ENCODE measurements at regions of chr3 and their contacts with region 1.

Region 1: DNA sequence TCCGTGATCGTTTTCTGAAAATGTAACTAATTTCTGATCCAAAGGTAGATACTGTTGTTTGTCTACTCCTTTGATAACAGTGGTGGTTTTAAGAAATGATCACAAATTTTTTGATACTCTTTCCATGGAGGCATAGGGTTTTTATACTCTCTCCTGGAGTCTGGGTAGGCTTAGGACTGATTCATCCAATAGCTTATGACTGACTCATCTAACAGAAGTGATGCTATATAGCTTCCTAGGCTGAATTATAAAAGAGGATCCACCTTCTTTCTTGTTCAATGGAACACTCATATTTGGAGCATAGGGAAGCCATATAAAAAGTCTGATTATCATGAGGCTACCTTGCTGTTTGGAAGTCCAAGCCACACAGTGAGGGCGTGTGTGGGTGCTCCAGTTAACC is 84.3 kb downstream of the CHST2 start:
- DNase-seq: no peak
- H3K4me3 Mint-ChIP-seq: no peak overlapping the region
- H3K27ac Mint-ChIP-seq: no peak overlapping the region
- H3K4me1 Mint-ChIP-seq: no peaks in the 10 kb centered on the region
- H3K27me3 Mint-ChIP-seq: no peaks in the 10 kb centered on the region

Region 2: GRCh38 chr3:143158014-143158988 is 45.5 kb before region 1 on chr3:
- CTCF ChIA-PET with region 1: no interaction called
- POLR2A ChIA-PET with region 1: no interaction called
- intact Hi-C with region 1: loop called (anchors 5 kb)
- DNase-seq: peak; percentile 28
- H3K4me3 Mint-ChIP-seq: no peak overlapping the region
- H3K27ac Mint-ChIP-seq: no peak overlapping the region
- H3K4me1 Mint-ChIP-seq: peaks cover 24% of the 10 kb centered on the region
- H3K27me3 Mint-ChIP-seq: peaks cover 2% of the 10 kb centered on the region